H1 (cell line): ENCODE measurements at regions of chr20 and their contacts with region 1.

Region 1: GRCh38 chr20:33947709-33948295 is 45.9 kb upstream of the RALY start:
- DNase-seq: peak; percentile 59 to 82
- H3K4me3 ChIP-seq: no peak overlapping the region
- H3K27ac ChIP-seq: no peak overlapping the region
- H3K4me1 ChIP-seq: no peaks in the 10 kb centered on the region
- H3K27me3 ChIP-seq: no peaks in the 10 kb centered on the region
- CTCF ChIP-seq: peak; percentile 87 to 100 (median 99)
- EP300 ChIP-seq: no peak; a peak in 1 of 3 replicates
- POLR2A ChIP-seq: no peak
- RAD21 ChIP-seq: peak; percentile 91 to 94

Region 2: DNA sequence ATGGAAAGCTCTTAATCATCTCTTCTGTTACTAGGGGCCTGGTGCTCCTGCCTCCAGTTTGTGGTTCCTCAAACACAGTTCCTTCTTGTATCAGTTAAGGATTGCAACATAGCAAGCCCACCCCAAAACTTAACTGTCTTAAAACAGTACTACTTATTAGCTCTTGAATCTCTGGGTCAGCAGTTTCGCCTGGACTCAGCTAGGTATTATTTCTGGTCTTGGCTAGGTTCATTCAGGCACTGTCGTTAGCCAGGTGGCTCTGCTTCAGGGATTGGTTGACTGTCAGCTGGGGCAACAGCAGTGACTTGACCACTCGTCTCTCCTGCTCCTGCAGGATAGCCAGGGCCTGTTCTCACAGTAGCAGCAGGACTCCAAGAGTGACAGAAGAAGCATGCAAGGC is 15.9 kb after region 1 on chr20:
- CTCF ChIA-PET with region 1: interaction called, 11 read pairs
- POLR2A ChIA-PET with region 1: no interaction called
- DNase-seq: no peak
- H3K4me3 ChIP-seq: no peak overlapping the region
- H3K27ac ChIP-seq: no peak overlapping the region
- H3K4me1 ChIP-seq: no peaks in the 10 kb centered on the region
- H3K27me3 ChIP-seq: no peaks in the 10 kb centered on the region
- CTCF ChIP-seq: no peak
- EP300 ChIP-seq: no peak
- POLR2A ChIP-seq: no peak
- RAD21 ChIP-seq: no peak

Region 3: DNA sequence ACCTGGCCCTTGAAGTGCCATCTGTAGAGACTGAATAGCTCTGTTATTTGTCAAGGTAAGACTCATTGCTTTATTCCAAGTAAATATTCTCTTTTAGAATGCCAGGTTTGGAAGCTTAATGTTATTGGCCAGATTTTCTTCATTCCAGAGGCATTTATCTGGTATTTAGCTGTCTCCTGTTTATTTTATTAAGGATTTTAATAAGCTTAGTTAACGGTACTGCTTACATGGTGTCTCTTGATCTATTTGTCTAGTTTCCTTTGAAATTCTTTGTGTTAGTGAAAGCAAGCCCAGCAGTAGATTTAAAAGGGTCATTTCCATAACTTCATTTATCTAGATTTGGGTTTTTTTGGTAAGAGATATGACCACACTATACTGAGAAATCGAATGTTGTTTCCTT is 53.6 kb after region 1 on chr20:
- CTCF ChIA-PET with region 1: no interaction called
- POLR2A ChIA-PET with region 1: no interaction called
- DNase-seq: no peak
- H3K4me3 ChIP-seq: no peak overlapping the region
- H3K27ac ChIP-seq: no peak overlapping the region
- H3K4me1 ChIP-seq: peaks cover 1 to 6% (median 5%) of the 10 kb centered on the region in 4 experiments; a peak in 2 of 7 replicates
- H3K27me3 ChIP-seq: no peaks in the 10 kb centered on the region
- CTCF ChIP-seq: no peak
- EP300 ChIP-seq: no peak
- POLR2A ChIP-seq: no peak
- RAD21 ChIP-seq: no peak